ENCODE measurements at regions of chr13 and their contacts with region 1.

Region 1: GRCh38 chr13:73835138-73835721 is 299.0 kb downstream of the KLF12 start:
- DNase-seq: no peak
- ATAC-seq: no peak
- H3K4me3 ChIP-seq: no peak overlapping the region
- H3K27ac ChIP-seq: no peak overlapping the region
- H3K4me1 ChIP-seq: no peaks in the 10 kb centered on the region; the same call in 1 of the 2 replicates
- H3K27me3 ChIP-seq: no peaks in the 10 kb centered on the region
- CTCF ChIP-seq: peak; percentile 56; the same call in 1 of the 2 replicates

Region 2: DNA sequence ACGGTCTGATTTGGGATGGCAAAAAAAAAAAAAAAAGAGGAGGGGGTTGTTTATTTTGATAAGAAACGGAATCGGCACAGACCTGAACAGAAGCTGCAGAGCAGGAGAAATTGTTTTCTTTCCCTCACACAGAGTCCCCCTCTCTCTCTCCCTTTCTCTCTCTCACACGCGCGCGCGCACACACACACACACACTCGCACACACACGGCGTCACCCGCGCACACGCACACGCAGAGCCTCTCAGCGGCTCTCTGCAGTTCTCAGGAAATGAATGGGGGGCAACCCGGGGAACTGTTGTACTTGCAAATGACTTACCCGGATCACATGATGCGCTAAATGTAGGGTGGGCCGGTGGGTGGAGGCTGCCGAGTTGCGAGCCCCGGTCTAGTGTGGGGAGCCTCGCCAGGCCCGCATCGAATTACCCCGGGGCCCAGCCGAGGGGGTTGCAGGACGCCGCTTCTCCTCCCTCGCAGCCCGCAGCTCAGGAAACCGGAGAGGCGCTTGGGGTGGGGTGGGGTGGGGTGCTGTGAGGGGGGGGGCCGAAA is 298.5 kb after region 1 on chr13:
- CTCF ChIA-PET with region 1: no interaction called
- POLR2A ChIA-PET with region 1: no interaction called
- in situ Hi-C with region 1: no loop called
- intact Hi-C with region 1: loop called (anchors 10 kb)
- DNase-seq: no peak
- ATAC-seq: peak; percentile 29
- H3K4me3 ChIP-seq: peak overlapping the region; percentile 60 to 61
- H3K27ac ChIP-seq: peak overlapping the region; percentile 17; the same call in 1 of the 2 replicates
- H3K4me1 ChIP-seq: peaks cover 11% of the 10 kb centered on the region
- H3K27me3 ChIP-seq: no peaks in the 10 kb centered on the region
- CTCF ChIP-seq: no peak

Region 3: DNA sequence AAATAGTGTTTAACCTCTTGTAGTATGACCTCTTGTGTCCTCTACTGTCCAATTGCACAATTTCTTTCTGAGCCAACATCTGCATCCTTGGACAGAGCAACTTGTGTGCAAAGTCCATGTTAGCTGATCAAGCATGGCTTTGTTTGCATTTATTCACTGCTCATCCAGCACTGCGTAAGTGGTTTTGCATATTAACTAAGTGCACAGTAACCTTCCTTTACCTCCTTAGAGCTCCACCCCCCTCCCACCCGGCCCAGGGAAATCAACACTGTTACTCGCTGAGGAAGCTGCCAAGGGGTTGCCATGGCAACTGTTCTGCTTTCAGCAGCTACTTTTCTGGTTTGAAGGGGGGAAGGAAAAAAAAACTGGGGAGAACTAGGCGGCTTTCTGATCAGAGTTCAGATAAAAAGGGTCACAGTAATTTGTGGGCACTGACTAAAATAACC is 452.5 kb after region 1 on chr13:
- CTCF ChIA-PET with region 1: no interaction called
- POLR2A ChIA-PET with region 1: no interaction called
- in situ Hi-C with region 1: no loop called
- intact Hi-C with region 1: loop called (anchors 10 kb)
- DNase-seq: no peak
- ATAC-seq: no peak
- H3K4me3 ChIP-seq: no peak overlapping the region
- H3K27ac ChIP-seq: no peak overlapping the region
- H3K4me1 ChIP-seq: no peaks in the 10 kb centered on the region
- H3K27me3 ChIP-seq: no peaks in the 10 kb centered on the region
- CTCF ChIP-seq: no peak

Region 4: GRCh38 chr13:75219479-75220237 is 1384.4 kb after region 1 on chr13:
- CTCF ChIA-PET with region 1: no interaction called
- POLR2A ChIA-PET with region 1: no interaction called
- in situ Hi-C with region 1: no loop called
- intact Hi-C with region 1: loop called (anchors 5 kb)
- DNase-seq: no peak
- ATAC-seq: peak; percentile 97
- H3K4me3 ChIP-seq: peak overlapping the region in 1 of 2 experiments; percentile 30; a peak in 1 of 4 replicates
- H3K27ac ChIP-seq: no peak overlapping the region
- H3K4me1 ChIP-seq: no peaks in the 10 kb centered on the region
- H3K27me3 ChIP-seq: no peaks in the 10 kb centered on the region
- CTCF ChIP-seq: peak; percentile 92

Region 5: GRCh38 chr13:75830842-75831241 is 1995.6 kb after region 1 on chr13:
- CTCF ChIA-PET with region 1: no interaction called
- POLR2A ChIA-PET with region 1: no interaction called
- in situ Hi-C with region 1: no loop called
- intact Hi-C with region 1: no loop called
- DNase-seq: no peak
- ATAC-seq: no peak
- H3K4me3 ChIP-seq: no peak overlapping the region
- H3K27ac ChIP-seq: no peak overlapping the region
- H3K4me1 ChIP-seq: no peaks in the 10 kb centered on the region
- H3K27me3 ChIP-seq: no peaks in the 10 kb centered on the region
- CTCF ChIP-seq: no peak